CD4-positive, alpha-beta memory T cell (primary cell): ENCODE measurements at regions of chr5 and their contacts with region 1.

Region 1: DNA sequence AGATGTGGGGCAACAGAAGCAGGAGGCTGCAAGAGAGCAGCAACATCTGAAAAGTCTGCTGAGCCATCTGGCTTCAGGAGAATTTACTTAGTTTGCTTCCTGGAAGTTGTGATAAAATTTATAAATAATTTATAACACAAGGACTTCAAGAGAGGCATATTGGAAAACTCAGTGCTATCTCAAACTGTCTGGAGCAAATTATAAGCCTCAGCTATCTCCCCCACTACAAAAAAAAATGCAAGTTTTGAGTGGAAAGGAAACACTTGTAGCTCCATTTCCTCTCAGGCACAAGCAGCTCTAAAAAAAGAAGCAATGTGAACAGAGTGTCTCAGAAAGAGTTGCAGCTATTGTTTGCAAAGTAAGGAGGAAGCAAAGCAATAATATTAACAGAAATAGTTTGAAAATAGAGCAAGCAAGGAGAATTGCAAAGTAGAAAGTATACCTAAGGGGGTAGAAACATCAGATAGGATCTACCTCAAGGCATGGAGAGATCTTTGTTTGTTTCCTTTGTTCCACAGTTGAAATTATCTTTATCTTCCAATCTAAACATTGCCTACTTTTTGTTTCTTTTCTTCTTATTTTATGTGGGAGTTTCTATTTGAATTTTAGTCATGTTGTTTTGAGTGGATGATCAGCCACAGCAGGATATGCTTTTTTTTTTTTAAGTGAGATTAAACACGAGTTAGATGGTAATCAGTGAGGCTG is 55.9 kb upstream of the IL6ST start:
- DNase-seq: peak in 4 of 5 donors; percentile 45 to 62 (median 54)
- H3K4me3 ChIP-seq: no peak overlapping the region
- H3K4me3 Mint-ChIP-seq: peak overlapping the region; percentile 77 to 86 (median 82)
- H3K27ac ChIP-seq: no peak overlapping the region
- H3K27ac Mint-ChIP-seq: peak overlapping the region; percentile 73 to 96 (median 87)
- H3K4me1 ChIP-seq: peaks cover 65% of the 10 kb centered on the region
- H3K4me1 Mint-ChIP-seq: peaks cover 40 to 73% (median 55%) of the 10 kb centered on the region in 4 donors
- H3K27me3 ChIP-seq: no peaks in the 10 kb centered on the region
- H3K27me3 Mint-ChIP-seq: no peaks in the 10 kb centered on the region

Region 2: GRCh38 chr5:54936201-54936600 is 1114.5 kb before region 1 on chr5:
- CTCF ChIA-PET with region 1: no interaction called
- POLR2A ChIA-PET with region 1: no interaction called
- intact Hi-C with region 1: no loop called
- DNase-seq: no peak
- H3K4me3 ChIP-seq: no peak overlapping the region
- H3K4me3 Mint-ChIP-seq: no peak overlapping the region
- H3K27ac ChIP-seq: no peak overlapping the region
- H3K27ac Mint-ChIP-seq: no peak overlapping the region
- H3K4me1 ChIP-seq: no peaks in the 10 kb centered on the region
- H3K4me1 Mint-ChIP-seq: no peaks in the 10 kb centered on the region
- H3K27me3 ChIP-seq: peaks cover 9% of the 10 kb centered on the region
- H3K27me3 Mint-ChIP-seq: peaks cover 10 to 22% of the 10 kb centered on the region in 2 donors

Region 3: DNA sequence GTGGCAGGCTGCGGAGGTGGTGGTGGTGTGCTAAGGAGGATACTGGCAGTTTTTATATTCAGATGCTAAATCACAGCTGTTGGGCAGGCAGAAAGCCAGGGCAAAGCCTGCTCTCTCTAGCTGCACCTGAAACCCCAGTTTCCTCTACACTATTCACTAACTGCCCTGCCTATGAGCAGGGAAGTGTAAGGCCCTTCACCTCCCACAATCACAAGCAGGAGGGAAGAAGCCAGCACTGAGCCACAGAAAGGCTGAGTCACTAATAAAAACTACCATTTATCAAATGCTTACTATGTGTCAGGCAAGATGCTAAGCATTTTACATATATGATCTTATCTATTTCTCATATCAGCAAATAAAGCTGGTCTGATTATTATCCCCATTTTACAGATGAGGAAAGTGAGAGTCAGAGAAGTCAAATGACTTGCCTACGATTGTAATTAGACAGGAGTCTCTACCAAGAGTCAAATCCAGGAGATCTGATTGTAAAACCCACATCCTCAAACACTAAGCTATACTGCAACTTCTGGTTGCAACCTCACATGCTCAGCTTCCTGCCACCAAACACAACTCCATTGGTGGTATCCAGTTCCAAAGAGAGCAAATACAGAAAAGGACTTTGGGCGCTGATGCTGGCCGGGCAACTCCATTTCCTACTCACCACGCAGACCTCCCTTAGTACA is 38.3 kb before region 1 on chr5:
- CTCF ChIA-PET with region 1: interaction called, 3 read pairs
- POLR2A ChIA-PET with region 1: interaction called, 20 read pairs
- intact Hi-C with region 1: loop called (anchors 2 kb)
- DNase-seq: peak; percentile 59 to 77 (median 63)
- H3K4me3 ChIP-seq: peak overlapping the region in 1 of 2 donors; percentile 20
- H3K4me3 Mint-ChIP-seq: peak overlapping the region; percentile 8 to 82 (median 57)
- H3K27ac ChIP-seq: peak overlapping the region; percentile 12
- H3K27ac Mint-ChIP-seq: peak overlapping the region; percentile 73 to 85 (median 83)
- H3K4me1 ChIP-seq: peaks cover 30% of the 10 kb centered on the region
- H3K4me1 Mint-ChIP-seq: peaks cover 25 to 50% (median 31%) of the 10 kb centered on the region in 4 donors
- H3K27me3 ChIP-seq: no peaks in the 10 kb centered on the region
- H3K27me3 Mint-ChIP-seq: no peaks in the 10 kb centered on the region

Region 4: GRCh38 chr5:56328753-56329560 is 278.3 kb after region 1 on chr5:
- CTCF ChIA-PET with region 1: no interaction called
- POLR2A ChIA-PET with region 1: no interaction called
- intact Hi-C with region 1: no loop called
- DNase-seq: peak; percentile 50 to 82 (median 73)
- H3K4me3 ChIP-seq: no peak overlapping the region
- H3K4me3 Mint-ChIP-seq: peak overlapping the region; percentile 47 to 80 (median 61)
- H3K27ac ChIP-seq: peak overlapping the region; percentile 67
- H3K27ac Mint-ChIP-seq: peak overlapping the region; percentile 58 to 91 (median 76)
- H3K4me1 ChIP-seq: peaks cover 59% of the 10 kb centered on the region
- H3K4me1 Mint-ChIP-seq: peaks cover 45 to 69% (median 59%) of the 10 kb centered on the region in 4 donors
- H3K27me3 ChIP-seq: no peaks in the 10 kb centered on the region
- H3K27me3 Mint-ChIP-seq: no peaks in the 10 kb centered on the region

Region 5: DNA sequence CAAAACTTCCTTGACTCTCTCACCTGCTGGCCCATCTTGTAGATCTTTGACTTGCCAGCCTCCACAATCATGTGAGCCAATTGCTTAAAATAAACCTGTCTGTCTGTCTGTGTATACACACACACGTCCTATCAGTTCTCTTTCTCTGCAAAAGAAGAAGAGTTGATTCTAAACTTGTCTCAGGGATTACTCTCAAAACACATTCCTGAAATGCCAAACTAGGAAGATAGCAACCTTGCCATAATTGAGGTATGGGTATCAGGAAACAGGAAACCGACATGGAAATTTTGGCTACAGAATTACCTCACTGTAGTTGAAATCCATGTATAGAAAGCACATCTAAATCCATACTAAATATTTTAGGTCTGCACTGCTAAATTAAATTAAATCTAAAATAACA is 1925.8 kb after region 1 on chr5:
- CTCF ChIA-PET with region 1: no interaction called
- POLR2A ChIA-PET with region 1: no interaction called
- intact Hi-C with region 1: no loop called
- DNase-seq: no peak
- H3K4me3 ChIP-seq: no peak overlapping the region
- H3K4me3 Mint-ChIP-seq: no peak overlapping the region
- H3K27ac ChIP-seq: no peak overlapping the region
- H3K27ac Mint-ChIP-seq: no peak overlapping the region
- H3K4me1 ChIP-seq: no peaks in the 10 kb centered on the region
- H3K4me1 Mint-ChIP-seq: no peaks in the 10 kb centered on the region
- H3K27me3 ChIP-seq: no peaks in the 10 kb centered on the region
- H3K27me3 Mint-ChIP-seq: peaks cover 0 to 2% of the 10 kb centered on the region in 2 donors